ENCODE measurements at regions of chr2 and their contacts with region 1.

Region 1: GRCh38 chr2:127792805-127793204 is 18.2 kb downstream of the WDR33 start:
- DNase-seq: no peak
- ATAC-seq: no peak
- H3K4me3 Mint-ChIP-seq: no peak overlapping the region
- H3K27ac Mint-ChIP-seq: peak overlapping the region; percentile 24
- H3K4me1 Mint-ChIP-seq: peaks cover 46% of the 10 kb centered on the region
- H3K27me3 Mint-ChIP-seq: no peaks in the 10 kb centered on the region

Region 2: GRCh38 chr2:127770973-127771735 is 21.7 kb before region 1 on chr2:
- CTCF ChIA-PET with region 1: no interaction called
- POLR2A ChIA-PET with region 1: no interaction called
- intact Hi-C with region 1: no loop called
- DNase-seq: no peak
- ATAC-seq: peak; percentile 68
- H3K4me3 Mint-ChIP-seq: no peak overlapping the region
- H3K27ac Mint-ChIP-seq: no peak overlapping the region
- H3K4me1 Mint-ChIP-seq: peaks cover 19% of the 10 kb centered on the region
- H3K27me3 Mint-ChIP-seq: no peaks in the 10 kb centered on the region

Region 3: GRCh38 chr2:127841466-127842178 is 48.8 kb after region 1 on chr2:
- CTCF ChIA-PET with region 1: no interaction called
- POLR2A ChIA-PET with region 1: no interaction called
- intact Hi-C with region 1: loop called in 1 of 2 experiments (anchors 1 kb)
- DNase-seq: no peak
- ATAC-seq: no peak
- H3K4me3 Mint-ChIP-seq: no peak overlapping the region
- H3K27ac Mint-ChIP-seq: no peak overlapping the region
- H3K4me1 Mint-ChIP-seq: peaks cover 4% of the 10 kb centered on the region
- H3K27me3 Mint-ChIP-seq: no peaks in the 10 kb centered on the region